CD4-positive, alpha-beta T cell (primary cell): ENCODE measurements at regions of chr16 and their contacts with region 1.

Region 1: DNA sequence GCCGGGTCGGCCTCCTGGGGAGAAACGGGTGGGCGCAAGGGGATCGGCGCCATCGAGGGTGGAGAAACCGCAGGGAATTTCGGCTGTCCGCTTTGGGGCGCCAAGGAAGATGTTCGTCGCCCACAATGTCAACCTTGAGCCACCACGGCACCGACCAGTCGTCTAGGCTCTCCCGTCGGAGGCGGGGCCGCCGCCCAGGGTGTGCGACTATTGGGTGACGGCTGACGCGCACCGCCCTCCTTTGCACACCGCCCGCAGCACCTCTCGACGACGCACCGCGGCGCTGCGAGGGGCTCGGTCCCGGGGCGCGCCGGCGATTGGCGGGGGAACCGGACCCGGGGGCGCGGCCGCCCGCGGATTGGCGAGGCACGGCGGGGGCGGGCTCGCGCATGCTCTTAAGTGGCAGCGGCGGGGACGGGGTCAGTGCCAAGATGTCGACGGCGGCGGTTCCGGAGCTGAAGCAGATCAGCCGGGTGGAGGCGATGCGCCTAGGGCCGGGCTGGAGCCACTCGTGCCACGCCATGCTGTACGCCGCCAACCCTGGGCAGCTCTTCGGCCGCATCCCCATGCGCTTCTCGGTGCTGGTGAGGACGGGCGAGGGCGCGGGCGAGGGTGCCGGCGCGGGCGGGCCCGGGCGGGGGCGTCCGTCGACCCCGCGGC is at the start of gene NUDT16L1:
- DNase-seq: peak in 13 of 14 experiments; percentile 93 to 99 (median 97)
- ATAC-seq: peak; percentile 90
- H3K4me3 ChIP-seq: peak within 1 kb of the TSS; percentile 93
- H3K4me3 Mint-ChIP-seq: peak within 1 kb of the TSS; percentile 91
- H3K27ac ChIP-seq: peak within 1 kb of the TSS; percentile 63 to 81
- H3K27ac Mint-ChIP-seq: peak within 1 kb of the TSS; percentile 89
- H3K4me1 ChIP-seq: peaks cover 25% of the 10 kb centered on the region
- H3K4me1 Mint-ChIP-seq: peaks cover 7% of the 10 kb centered on the region
- H3K27me3 ChIP-seq: no peaks in the 10 kb centered on the region
- H3K27me3 Mint-ChIP-seq: no peaks in the 10 kb centered on the region
- CTCF ChIP-seq: no peak
- total RNA-seq, gene NUDT16L1: 75.2 to 78.9 TPM

Region 2: DNA sequence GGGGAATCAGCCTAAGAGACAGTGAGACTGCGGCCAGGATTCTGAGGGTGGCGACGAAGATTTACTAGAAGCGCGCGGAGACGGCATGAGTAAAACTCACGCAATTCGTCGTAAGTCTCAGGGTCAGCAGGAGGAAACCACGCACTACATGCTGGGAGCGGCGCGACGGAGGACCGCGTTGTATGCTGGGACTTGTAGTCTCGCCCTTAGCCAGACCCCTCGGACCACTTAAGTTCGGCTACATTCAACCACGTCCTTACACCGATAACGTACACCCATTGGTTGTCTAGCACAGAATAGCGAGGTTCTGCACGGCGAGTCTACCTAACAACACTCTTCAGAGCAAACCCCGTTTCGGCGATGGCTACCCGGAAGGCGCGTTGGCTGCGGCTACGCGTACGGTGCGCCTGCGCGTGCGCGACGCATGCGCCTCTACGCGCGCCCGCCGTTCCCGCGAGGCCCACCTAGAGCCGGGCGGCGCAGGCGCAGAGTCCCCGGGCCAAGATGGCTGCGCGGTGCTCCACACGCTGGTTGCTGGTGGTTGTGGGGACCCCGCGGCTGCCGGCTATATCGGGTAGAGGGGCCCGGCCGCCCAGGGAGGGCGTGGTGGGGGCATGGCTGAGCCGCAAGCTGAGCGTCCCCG is 267.9 kb before region 1 on chr16 and contains the start of gene DNAJA3:
- CTCF ChIA-PET with region 1: no interaction called
- POLR2A ChIA-PET with region 1: no interaction called
- intact Hi-C with region 1: loop called in 1 of 2 experiments (anchors 10 kb)
- DNase-seq: peak; percentile 82 to 98 (median 90)
- ATAC-seq: peak; percentile 84
- H3K4me3 ChIP-seq: peak within 1 kb of the TSS; percentile 71
- H3K4me3 Mint-ChIP-seq: peak within 1 kb of the TSS; percentile 91
- H3K27ac ChIP-seq: peak within 1 kb of the TSS; percentile 93 to 99
- H3K27ac Mint-ChIP-seq: peak within 1 kb of the TSS; percentile 99
- H3K4me1 ChIP-seq: peaks cover 34% of the 10 kb centered on the region
- H3K4me1 Mint-ChIP-seq: peaks cover 27% of the 10 kb centered on the region
- H3K27me3 ChIP-seq: no peaks in the 10 kb centered on the region
- H3K27me3 Mint-ChIP-seq: no peaks in the 10 kb centered on the region
- CTCF ChIP-seq: no peak
- total RNA-seq, gene DNAJA3: 17.2 to 18.8 TPM

Region 3: DNA sequence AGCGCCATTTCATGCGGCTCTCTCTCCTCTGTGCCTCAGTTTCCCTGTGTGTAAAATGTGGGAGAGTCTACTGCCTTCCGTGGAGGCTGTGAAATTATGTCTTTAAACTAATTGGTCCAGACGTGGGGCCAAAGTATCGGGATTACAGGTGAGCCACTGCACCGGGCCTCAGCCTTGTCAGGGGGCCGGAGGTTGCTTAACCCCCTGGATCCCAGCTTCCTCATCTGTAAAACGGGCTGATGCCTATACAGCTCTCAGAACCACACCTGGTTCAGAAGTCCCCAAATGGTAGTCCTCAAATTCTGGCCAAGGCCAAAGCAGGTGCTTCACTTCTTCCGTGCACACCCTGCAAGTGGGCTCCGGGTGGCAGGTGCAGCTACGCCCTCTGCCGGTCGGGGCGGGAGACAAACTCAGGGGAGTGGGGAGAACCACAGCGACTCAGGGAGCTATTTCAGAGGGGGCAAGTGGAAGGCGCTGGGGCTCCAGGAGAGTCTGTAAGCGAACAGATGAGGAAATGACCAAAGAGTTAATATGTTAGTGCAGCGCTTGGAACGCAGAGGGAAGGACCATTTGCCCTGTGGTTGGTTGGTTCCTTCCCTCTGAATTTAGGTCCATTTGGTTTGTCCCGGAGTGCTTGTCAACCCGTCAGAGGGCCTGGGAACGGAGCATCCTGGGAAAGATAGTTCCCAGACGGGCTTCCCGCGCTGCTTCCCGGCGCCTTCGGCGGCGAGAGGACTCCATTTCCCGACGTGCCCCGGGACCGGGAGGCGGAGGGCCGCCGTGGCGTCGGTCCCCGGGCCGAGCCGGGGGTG is 69.2 kb before region 1 on chr16 and contains the start of gene MGRN1:
- CTCF ChIA-PET with region 1: interaction called, 4 read pairs
- POLR2A ChIA-PET with region 1: interaction called, 11 read pairs
- intact Hi-C with region 1: loop called (anchors 2 kb)
- DNase-seq: peak; percentile 85 to 97 (median 90)
- ATAC-seq: peak; percentile 94
- H3K4me3 ChIP-seq: peak within 1 kb of the TSS; percentile 85
- H3K4me3 Mint-ChIP-seq: peak within 1 kb of the TSS; percentile 95
- H3K27ac ChIP-seq: peak within 1 kb of the TSS; percentile 72 to 94
- H3K27ac Mint-ChIP-seq: peak within 1 kb of the TSS; percentile 98
- H3K4me1 ChIP-seq: peaks cover 29% of the 10 kb centered on the region
- H3K4me1 Mint-ChIP-seq: peaks cover 33% of the 10 kb centered on the region
- H3K27me3 ChIP-seq: no peaks in the 10 kb centered on the region
- H3K27me3 Mint-ChIP-seq: no peaks in the 10 kb centered on the region
- CTCF ChIP-seq: peak; percentile 98
- total RNA-seq, gene MGRN1: 45.9 to 48.6 TPM

Region 4: DNA sequence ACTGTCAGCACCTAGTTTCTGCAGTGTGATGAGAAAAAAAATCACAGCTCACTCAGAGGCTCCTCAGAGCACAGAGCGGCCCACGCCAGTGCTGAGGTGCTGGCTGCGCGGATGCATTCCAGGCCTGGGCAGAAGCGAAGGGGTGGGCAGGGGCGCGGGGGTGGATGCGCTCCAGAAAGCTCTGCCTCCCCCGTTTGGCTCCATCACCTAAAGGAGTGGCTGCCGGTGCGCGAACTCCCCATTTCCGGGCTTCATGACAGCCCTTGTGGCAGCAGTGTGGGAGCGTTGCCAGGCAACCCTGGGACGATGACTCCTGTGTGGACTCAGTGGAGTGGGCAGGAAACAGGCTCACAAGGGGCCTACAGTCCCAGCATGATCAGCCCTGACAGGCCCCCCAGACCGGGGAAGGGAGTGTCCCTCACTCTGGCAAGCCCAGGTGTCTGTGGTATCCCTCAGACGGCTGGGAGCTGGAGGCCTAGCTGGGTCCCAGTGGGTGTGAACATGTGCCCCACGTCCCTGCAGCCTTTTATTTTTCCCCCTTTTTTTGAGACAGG is 32.9 kb before region 1 on chr16:
- CTCF ChIA-PET with region 1: no interaction called
- POLR2A ChIA-PET with region 1: interaction called, 12 read pairs
- intact Hi-C with region 1: loop called in 1 of 2 experiments (anchors 2 kb)
- DNase-seq: peak; percentile 29 to 91 (median 59)
- ATAC-seq: peak; percentile 65
- H3K4me3 ChIP-seq: peak overlapping the region; percentile 9
- H3K4me3 Mint-ChIP-seq: peak overlapping the region; percentile 50
- H3K27ac ChIP-seq: peak overlapping the region; percentile 43 to 76
- H3K27ac Mint-ChIP-seq: peak overlapping the region; percentile 95
- H3K4me1 ChIP-seq: peaks cover 68% of the 10 kb centered on the region
- H3K4me1 Mint-ChIP-seq: peaks cover 65% of the 10 kb centered on the region
- H3K27me3 ChIP-seq: no peaks in the 10 kb centered on the region
- H3K27me3 Mint-ChIP-seq: no peaks in the 10 kb centered on the region
- CTCF ChIP-seq: no peak

Region 5: GRCh38 chr16:4734063-4734729 is 40.8 kb after region 1 on chr16 and contains the starts of genes ANKS3 and DNAAF8:
- CTCF ChIA-PET with region 1: interaction called, 7 read pairs
- POLR2A ChIA-PET with region 1: interaction called, 31 read pairs
- intact Hi-C with region 1: loop called in 1 of 2 experiments (anchors 1 kb)
- DNase-seq: peak; percentile 57 to 90 (median 72)
- ATAC-seq: peak; percentile 76
- H3K4me3 ChIP-seq: peak within 1 kb of the TSS; percentile 99
- H3K4me3 Mint-ChIP-seq: peak within 1 kb of the TSS; percentile 98
- H3K27ac ChIP-seq: peak within 1 kb of the TSS; percentile 68 to 85
- H3K27ac Mint-ChIP-seq: peak within 1 kb of the TSS; percentile 90
- H3K4me1 ChIP-seq: peaks cover 21% of the 10 kb centered on the region
- H3K4me1 Mint-ChIP-seq: peaks cover 31% of the 10 kb centered on the region
- H3K27me3 ChIP-seq: no peaks in the 10 kb centered on the region
- H3K27me3 Mint-ChIP-seq: no peaks in the 10 kb centered on the region
- CTCF ChIP-seq: no peak
- total RNA-seq, gene ANKS3: 13.5 TPM
- total RNA-seq, gene DNAAF8: 0.25 TPM in 1 of 2 experiments, not detected in the other

Region 6: DNA sequence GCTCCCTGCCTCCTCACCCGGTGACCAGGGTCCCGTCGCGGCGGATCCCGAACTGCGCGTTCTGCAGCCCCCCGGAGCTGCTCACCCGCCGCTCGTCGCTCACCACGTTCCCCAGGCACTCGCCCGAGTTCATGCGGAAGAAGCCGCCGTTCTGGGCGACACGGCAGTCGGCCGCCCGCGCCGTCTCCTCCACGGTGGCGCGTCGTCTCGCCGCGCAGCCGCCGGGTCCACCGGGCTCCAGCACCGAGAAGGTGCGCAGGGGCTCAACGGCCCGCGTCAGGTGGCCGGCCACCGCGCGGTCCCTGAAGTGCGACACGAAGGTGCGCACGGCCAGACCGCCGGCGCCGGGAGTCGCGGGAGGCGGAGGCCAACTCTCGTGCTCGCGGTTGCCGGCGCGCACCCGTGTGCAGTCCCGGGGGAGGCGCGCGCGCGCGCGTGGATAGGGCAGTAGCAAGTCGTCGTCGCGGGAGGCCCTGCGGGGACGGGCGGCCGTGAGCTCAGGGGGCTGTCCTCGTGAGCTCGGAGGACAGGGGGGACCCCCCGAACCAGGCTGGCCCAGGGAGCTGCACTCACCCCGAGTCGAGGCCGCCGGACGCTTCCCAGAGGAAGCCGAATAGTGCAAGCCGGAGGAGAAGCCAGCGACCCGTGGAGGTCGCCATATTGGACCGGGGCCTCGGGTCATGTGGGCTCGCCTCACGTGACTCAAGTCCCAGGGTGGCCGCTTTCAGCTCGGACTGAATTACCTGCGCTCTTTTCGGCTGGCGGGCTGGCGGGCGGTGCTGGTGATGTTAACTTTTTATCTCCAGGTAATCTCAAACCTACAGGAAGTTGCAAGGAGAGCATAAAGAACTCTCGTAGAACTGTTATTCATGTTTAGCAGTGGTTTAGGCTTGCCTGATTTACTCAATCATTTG is 340.1 kb after region 1 on chr16 and contains the start of gene NAGPA:
- CTCF ChIA-PET with region 1: no interaction called
- POLR2A ChIA-PET with region 1: no interaction called
- intact Hi-C with region 1: loop called in 1 of 2 experiments (anchors 10 kb)
- DNase-seq: peak; percentile 72 to 90 (median 80)
- ATAC-seq: peak; percentile 90
- H3K4me3 ChIP-seq: peak within 1 kb of the TSS; percentile 73
- H3K4me3 Mint-ChIP-seq: peak within 1 kb of the TSS; percentile 86
- H3K27ac ChIP-seq: peak within 1 kb of the TSS; percentile 39 to 68
- H3K27ac Mint-ChIP-seq: peak within 1 kb of the TSS; percentile 84
- H3K4me1 ChIP-seq: peaks cover 19% of the 10 kb centered on the region
- H3K4me1 Mint-ChIP-seq: peaks cover 20% of the 10 kb centered on the region
- H3K27me3 ChIP-seq: no peaks in the 10 kb centered on the region
- H3K27me3 Mint-ChIP-seq: no peaks in the 10 kb centered on the region
- CTCF ChIP-seq: no peak
- total RNA-seq, gene NAGPA: 30.0 to 34.0 TPM